Psoas muscle (tissue), 8 donors: ENCODE measurements at regions of chr5 and their contacts with region 1.

Region 1: GRCh38 chr5:143023411-143024096 is 253.4 kb downstream of the ARHGAP26 start:
- DNase-seq: peak; percentile 67 to 92
- ATAC-seq: peak; percentile 94 to 98 (median 96)
- H3K4me3 ChIP-seq: peak overlapping the region; percentile 7
- H3K27ac ChIP-seq: peak overlapping the region; percentile 86
- H3K4me1 ChIP-seq: peaks cover 51% of the 10 kb centered on the region
- H3K27me3 ChIP-seq: no peaks in the 10 kb centered on the region
- CTCF ChIP-seq: no peak

Region 2: DNA sequence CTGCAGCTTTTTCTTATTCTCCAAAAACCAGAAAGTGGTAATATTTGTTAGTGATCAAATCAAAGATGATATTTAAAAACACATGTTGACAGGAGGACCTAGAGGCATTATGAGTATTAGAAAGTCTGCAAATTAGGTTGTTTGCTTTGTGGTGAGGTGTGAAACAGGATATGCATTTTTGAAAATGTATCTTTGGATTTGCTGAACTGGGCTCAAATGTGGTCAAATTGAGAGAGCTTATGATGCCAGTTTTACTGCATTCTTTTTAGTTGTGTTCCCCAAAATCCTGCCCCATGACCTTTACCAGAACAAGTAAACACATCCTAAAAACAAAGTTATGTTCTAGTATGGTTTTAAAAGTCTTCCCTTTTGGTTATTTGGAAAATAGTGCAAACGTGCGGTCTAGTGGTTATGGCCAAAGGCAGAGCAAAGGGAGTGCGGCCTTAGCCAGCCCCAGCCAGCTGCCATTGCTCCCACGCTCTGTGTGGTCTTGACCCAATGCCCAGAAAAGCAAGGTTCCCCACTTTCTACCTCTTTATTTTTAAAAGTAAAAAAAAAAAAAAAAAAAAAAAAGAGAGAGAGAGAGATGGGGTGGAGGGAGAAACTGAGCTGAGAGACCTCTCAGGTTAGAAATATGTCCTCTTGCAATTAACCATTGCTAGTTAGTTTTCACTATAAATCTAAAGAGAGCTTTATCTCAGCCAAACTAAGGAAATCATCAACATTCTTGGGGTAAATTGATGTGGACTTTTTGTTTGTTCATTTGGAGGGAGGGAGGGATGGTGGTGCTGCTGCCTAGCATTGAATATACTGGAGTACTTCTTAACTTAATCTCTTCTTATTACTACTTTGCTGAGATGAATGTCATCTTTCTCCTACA is 76.8 kb before region 1 on chr5:
- intact Hi-C with region 1: no loop called
- DNase-seq: no peak
- ATAC-seq: no peak
- H3K4me3 ChIP-seq: no peak overlapping the region
- H3K27ac ChIP-seq: no peak overlapping the region
- H3K4me1 ChIP-seq: peaks cover 12% of the 10 kb centered on the region
- H3K27me3 ChIP-seq: no peaks in the 10 kb centered on the region
- CTCF ChIP-seq: no peak

Region 3: DNA sequence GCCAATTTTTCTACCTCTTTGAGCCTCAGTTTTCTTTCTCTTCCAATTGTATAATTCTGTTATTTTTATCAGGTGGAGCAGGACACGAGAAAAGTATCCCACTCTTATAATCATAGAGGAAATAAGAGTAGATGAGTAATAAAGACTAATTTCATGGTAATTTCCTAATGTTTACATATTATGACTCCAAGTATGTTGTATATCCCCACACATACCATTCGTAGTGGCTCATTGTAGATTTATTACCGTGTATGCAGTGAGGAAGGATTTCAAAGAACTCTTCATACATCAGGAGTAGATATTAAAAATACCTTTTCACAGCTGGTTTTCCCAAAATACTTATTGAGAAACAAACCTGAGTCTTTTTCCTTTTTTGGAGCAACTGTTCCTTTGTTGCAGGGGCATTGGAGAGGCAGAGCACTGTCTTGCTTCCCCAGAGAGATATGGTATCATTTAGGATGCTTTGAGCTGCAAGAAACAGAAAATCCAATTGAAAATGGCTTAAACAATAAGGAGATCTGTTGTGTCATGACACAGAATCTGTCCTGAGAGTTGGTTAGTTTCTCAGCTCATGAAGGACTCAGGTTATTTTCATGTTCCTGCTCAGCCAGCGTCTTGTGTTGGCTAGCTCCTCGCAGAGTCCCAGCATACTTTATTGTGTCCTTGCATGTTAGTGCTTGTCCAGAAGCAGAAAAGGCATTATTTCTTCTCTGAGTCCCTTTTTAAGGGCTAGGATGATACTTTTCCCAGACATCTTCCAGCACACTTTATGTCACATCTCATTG is 37.8 kb after region 1 on chr5:
- intact Hi-C with region 1: loop called in 1 of 2 experiments (anchors 1 kb)
- DNase-seq: no peak
- ATAC-seq: no peak
- H3K4me3 ChIP-seq: no peak overlapping the region
- H3K27ac ChIP-seq: peak overlapping the region; percentile 94
- H3K4me1 ChIP-seq: peaks cover 95% of the 10 kb centered on the region
- H3K27me3 ChIP-seq: no peaks in the 10 kb centered on the region
- CTCF ChIP-seq: no peak

Region 4: GRCh38 chr5:143506881-143507551 is 483.5 kb after region 1 on chr5:
- intact Hi-C with region 1: loop called in 1 of 2 experiments (anchors 10 kb)
- DNase-seq: no peak
- ATAC-seq: peak; percentile 88 to 95 (median 90)
- H3K4me3 ChIP-seq: no peak overlapping the region
- H3K27ac ChIP-seq: peak overlapping the region; percentile 77
- H3K4me1 ChIP-seq: peaks cover 35% of the 10 kb centered on the region
- H3K27me3 ChIP-seq: no peaks in the 10 kb centered on the region
- CTCF ChIP-seq: no peak